Activated CD4-positive, alpha-beta T cell treated with anti-CD3 and anti-CD28 coated beads for 36 hours (primary cell): ENCODE measurements at regions of chr17 and their contacts with region 1.

Region 1: GRCh38 chr17:38752119-38752929 is at the start of gene PSMB3:
- DNase-seq: peak; percentile 99
- ATAC-seq: peak; percentile 95
- H3K4me3 Mint-ChIP-seq: peak within 1 kb of the TSS; percentile 93
- H3K27ac Mint-ChIP-seq: peak within 1 kb of the TSS; percentile 99
- H3K4me1 Mint-ChIP-seq: peaks cover 43% of the 10 kb centered on the region
- H3K27me3 Mint-ChIP-seq: peaks cover 23% of the 10 kb centered on the region
- total RNA-seq, gene PSMB3: 337 to 396 TPM

Region 2: DNA sequence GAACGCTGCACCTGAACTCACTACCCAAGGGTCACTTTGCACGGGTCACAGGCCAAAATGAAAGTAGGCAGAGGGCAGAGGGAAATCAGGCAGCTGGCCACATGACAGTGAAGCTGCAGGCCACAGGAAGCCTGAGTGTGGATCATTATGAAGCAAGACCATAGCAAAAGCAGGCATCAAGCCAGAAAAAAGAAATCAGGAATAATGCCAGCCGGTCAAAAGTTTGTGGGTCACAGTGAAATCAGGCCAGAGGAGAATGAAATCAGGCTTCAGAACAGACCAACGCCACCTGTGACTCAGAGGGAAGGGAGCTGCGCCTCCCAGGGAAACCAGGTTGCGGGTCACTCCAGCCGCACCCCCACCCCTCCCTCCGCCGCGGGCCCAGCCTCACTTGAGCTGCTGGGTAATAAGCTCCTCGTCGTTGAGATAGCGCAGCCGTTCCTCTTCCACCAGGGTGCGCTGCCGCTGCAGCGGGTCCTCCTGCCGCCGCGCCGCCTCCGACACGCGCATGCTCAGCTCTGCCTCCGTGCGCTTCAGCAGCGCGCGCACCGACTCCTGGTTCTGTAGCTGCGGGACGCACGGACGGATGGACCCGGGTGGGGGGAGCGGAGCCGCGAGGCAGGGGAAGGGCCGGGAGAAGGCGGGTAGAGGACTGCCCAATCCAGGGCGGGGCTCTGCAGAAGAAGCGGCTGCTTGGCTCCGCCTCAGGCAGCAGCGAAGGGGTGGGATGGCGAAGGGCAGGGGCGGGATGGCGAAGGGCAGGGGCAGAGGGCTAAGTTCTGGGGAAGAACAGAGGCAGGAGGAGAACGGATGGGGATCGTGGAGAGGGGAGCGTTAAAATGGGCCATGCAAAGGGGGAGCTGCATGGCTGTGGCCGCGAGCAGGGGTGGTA is 194.2 kb before region 1 on chr17:
- CTCF ChIA-PET with region 1: interaction called, 6 read pairs
- POLR2A ChIA-PET with region 1: no interaction called
- intact Hi-C with region 1: loop called (anchors 1 to 5 kb)
- DNase-seq: peak; percentile 95
- ATAC-seq: peak; percentile 85
- H3K4me3 Mint-ChIP-seq: peak overlapping the region; percentile 73
- H3K27ac Mint-ChIP-seq: no peak overlapping the region
- H3K4me1 Mint-ChIP-seq: peaks cover 22% of the 10 kb centered on the region
- H3K27me3 Mint-ChIP-seq: peaks cover 23% of the 10 kb centered on the region

Region 3: DNA sequence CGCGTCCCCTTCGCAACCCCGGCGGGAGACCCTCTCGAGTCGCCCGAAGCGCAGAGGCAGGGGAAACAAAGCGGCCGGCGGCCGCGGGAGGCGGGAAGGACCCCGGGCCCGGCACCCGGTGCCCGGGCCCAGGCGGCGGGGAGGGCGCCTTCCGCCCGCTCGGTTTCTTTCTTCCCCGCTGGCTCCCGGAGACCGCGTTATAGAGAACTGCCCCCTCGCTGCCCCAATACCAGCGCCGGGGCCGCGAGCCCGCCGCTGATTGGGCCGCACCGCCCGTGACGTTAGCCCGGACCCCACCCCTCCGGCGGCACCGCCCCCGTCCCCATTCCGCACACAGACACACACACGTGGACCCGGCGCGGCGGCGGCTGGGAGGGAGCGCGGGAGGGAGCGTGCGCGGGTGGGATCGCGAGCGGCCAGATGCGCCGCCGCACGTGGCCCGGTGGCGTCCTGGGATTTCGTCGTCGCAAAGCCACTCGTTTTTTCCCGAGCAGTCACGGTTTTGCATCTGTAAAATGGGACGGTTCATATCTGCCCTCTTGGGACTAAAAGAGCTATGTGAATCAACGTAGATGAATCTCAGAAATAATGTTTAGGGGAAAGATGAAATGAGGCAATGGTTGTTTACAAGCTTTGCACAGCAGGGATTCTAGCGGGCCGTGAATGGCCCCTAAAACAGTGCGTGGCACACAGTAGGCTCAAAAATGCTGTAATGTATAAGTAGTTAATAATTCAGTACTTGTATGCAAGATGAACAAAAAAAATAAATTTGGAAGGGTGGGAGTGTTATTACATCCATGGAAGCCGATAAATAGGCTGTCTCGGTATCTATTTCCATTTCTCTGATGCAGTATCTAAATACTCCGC is 77.3 kb before region 1 on chr17 and contains the start of gene EPOP:
- CTCF ChIA-PET with region 1: interaction called, 20 read pairs
- POLR2A ChIA-PET with region 1: interaction called, 3 read pairs
- intact Hi-C with region 1: loop called (anchors 1 kb)
- DNase-seq: peak; percentile 96
- ATAC-seq: peak; percentile 78
- H3K4me3 Mint-ChIP-seq: peak within 1 kb of the TSS; percentile 76
- H3K27ac Mint-ChIP-seq: peak within 1 kb of the TSS; percentile 85
- H3K4me1 Mint-ChIP-seq: peaks cover 47% of the 10 kb centered on the region
- H3K27me3 Mint-ChIP-seq: peaks cover 9% of the 10 kb centered on the region
- total RNA-seq, gene EPOP: 31.8 to 37.3 TPM

Region 4: DNA sequence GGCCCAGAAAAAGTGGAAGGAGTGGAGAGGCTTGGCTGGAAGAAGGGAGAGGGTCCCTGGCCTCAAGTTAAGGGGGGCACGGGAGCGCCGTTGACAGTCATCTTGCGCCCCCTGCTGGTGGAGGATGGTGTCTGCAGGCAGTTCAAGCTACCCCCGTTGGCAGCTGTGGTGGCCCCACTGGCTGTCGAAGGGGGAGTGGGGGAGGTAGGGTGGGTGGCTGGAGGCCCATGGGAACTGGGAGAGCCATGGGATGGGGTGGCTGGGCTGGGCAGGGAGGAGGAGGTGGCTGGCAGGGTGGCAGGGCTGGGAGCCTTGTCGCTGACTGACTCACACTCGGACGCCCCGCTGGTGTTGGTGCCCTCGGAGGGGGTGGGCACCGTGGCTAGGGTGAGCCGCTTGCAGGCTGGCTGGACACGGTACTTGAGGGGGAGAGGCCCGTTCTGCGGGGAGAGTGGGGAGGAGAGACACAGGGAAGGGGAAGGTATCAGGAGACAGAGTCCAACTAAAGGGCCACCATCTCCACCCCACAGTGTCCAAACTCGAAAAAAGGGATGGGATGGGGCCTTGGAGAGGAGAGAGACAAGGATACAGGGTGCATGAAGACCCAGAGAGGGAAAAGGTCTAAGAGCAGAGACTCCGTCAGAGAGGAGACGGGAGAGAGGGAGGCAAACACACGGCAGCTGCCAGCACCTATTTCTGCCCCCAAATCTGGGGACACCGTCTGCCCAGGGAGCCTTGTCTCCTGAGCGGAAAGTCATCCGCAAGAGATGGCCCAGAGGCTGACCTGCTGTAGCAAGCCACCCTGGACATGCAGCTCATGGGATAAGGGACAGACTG is 16.9 kb before region 1 on chr17:
- CTCF ChIA-PET with region 1: interaction called, 6 read pairs
- POLR2A ChIA-PET with region 1: no interaction called
- intact Hi-C with region 1: loop called (anchors 1 to 2 kb)
- DNase-seq: peak; percentile 85
- ATAC-seq: peak; percentile 21
- H3K4me3 Mint-ChIP-seq: no peak overlapping the region
- H3K27ac Mint-ChIP-seq: no peak overlapping the region
- H3K4me1 Mint-ChIP-seq: peaks cover 45% of the 10 kb centered on the region
- H3K27me3 Mint-ChIP-seq: no peaks in the 10 kb centered on the region

Region 5: DNA sequence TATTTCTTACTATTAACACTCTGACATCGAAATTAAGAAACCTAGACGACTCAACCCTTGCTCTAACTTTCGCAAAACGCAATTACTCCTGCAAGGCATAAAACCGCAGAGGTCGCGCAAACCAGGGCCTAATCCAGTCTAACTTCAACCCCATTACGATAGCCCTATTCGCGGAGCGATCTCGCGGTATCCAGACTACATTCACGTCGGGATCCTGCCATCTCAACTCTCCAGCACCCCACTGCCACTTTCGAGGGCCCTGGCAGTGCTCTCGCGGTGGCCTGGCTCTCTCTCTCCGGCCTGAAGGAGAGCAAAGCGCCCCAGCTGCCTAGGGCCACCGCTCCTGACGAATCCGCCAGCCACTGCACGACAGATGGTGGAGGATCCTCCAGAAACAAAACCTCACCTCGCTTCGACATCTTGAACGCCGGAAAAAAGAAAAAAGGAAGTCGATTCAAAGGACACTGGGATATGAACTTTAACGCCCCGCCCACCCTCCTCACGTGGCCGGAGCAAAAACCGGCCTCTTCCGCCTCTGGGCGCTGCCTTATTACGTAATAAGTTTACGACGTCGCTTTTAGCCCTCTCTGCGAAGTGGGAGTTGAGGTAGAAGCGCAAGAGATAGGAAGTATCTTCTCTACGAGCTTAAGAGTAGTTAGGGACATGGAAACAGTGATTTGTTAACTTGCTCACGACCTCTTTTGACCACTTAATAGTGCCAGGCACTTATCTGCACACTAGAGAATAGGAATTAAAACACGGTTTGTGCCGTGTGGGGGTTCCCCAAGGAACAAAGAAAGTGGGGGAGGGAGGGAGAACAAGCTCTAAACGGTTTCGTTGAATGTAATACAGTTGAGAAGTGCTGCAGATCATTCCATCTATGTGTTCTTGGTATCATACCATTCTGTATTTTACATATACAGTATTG is 101.2 kb after region 1 on chr17 and contains the start of gene RPL23:
- CTCF ChIA-PET with region 1: no interaction called
- POLR2A ChIA-PET with region 1: interaction called, 3 read pairs
- intact Hi-C with region 1: loop called (anchors 1 to 5 kb)
- DNase-seq: peak; percentile 96
- ATAC-seq: peak; percentile 87
- H3K4me3 Mint-ChIP-seq: peak within 1 kb of the TSS; percentile 99
- H3K27ac Mint-ChIP-seq: peak within 1 kb of the TSS; percentile 99
- H3K4me1 Mint-ChIP-seq: peaks cover 46% of the 10 kb centered on the region
- H3K27me3 Mint-ChIP-seq: no peaks in the 10 kb centered on the region
- total RNA-seq, gene RPL23: 1,886 to 1,896 TPM

Region 6: GRCh38 chr17:39401412-39402243 is 649.3 kb after region 1 on chr17 and contains the start of gene FBXL20:
- CTCF ChIA-PET with region 1: no interaction called
- POLR2A ChIA-PET with region 1: no interaction called
- intact Hi-C with region 1: loop called in 1 of 2 experiments (anchors 2 kb)
- DNase-seq: peak; percentile 97
- ATAC-seq: peak; percentile 63
- H3K4me3 Mint-ChIP-seq: peak within 1 kb of the TSS; percentile 91
- H3K27ac Mint-ChIP-seq: peak within 1 kb of the TSS; percentile 92
- H3K4me1 Mint-ChIP-seq: peaks cover 48% of the 10 kb centered on the region
- H3K27me3 Mint-ChIP-seq: no peaks in the 10 kb centered on the region
- total RNA-seq, gene FBXL20: 16.9 to 18.9 TPM